ENCODE measurements at regions of chr6 and their contacts with region 1.

Region 1: DNA sequence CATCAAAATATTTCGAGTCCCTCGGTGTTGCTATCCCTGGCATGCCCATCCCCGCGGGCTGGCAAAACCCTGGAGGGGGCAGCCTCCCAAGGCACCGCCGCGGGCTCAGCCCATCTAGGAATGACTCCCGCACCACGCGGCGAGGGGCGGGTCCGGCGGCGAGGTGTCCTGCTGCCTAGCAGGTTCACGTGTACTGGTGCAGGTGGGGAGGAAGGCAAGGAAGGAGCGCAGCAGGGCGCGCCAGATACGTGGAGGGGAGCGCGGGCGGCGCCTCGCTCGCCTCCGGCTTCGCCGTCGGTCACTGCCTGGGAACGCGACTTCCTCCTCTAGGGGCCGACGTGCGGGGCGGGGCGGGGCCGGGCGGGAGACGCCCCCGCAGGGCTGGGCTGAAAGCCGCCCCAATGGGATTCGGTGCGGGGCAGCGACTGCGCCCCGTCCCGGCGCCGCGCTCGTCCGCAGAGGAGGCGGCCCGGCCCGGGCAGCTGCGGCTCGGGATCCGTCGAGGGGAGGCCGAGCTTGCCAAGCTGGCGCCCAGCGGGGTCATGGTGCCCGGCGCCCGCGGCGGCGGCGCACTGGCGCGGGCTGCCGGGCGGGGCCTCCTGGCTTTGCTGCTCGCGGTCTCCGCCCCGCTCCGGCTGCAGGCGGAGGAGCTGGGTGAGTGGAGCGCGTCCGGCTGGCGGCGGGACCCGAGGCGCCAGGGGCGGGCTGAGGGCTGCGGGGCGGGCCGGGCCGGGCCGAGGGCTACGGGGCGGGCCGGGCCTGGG is at the start of gene DCBLD1:
- DNase-seq: peak; percentile 66
- ATAC-seq: peak; percentile 87
- H3K4me3 Mint-ChIP-seq: peak within 1 kb of the TSS; percentile 85
- H3K27ac Mint-ChIP-seq: peak within 1 kb of the TSS; percentile 48
- H3K4me1 Mint-ChIP-seq: peaks cover 18% of the 10 kb centered on the region
- H3K27me3 Mint-ChIP-seq: peaks cover 47% of the 10 kb centered on the region
- total RNA-seq, gene DCBLD1: 2.5 to 4.3 TPM

Region 2: DNA sequence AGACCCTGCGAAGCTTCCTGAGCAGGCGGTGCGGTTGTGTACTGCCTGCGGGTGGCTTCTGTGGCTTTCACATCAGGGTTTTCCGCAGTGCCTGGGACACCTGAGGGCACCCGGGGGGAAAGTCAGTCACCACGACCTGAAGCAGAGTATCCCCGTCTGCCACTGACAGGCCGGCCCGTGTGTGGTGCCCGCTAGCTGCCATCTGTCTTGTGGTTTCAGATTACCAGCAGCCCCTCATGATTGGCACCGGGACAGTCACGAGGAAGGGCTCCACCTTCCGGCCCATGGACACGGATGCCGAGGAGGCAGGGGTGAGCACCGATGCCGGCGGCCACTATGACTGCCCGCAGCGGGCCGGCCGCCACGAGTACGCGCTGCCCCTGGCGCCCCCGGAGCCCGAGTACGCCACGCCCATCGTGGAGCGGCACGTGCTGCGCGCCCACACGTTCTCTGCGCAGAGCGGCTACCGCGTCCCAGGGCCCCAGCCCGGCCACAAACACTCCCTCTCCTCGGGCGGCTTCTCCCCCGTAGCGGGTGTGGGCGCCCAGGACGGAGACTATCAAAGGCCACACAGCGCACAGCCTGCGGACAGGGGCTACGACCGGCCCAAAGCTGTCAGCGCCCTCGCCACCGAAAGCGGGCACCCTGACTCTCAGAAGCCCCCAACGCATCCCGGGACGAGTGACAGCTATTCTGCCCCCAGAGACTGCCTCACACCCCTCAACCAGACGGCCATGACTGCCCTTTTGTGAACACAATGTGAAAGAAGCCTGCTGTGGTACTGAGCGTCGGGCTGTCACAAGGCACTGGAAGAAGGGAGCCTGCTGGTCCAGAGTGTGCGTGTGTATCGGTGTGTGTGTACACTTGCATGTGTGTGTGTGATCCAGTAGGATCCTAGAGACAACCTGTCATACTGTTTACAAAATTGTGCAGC is 65.5 kb after region 1 on chr6:
- CTCF ChIA-PET with region 1: interaction called, 15 read pairs
- POLR2A ChIA-PET with region 1: interaction called, 4 read pairs
- DNase-seq: peak; percentile 62
- ATAC-seq: peak; percentile 56
- H3K4me3 Mint-ChIP-seq: peak overlapping the region; percentile 75
- H3K27ac Mint-ChIP-seq: peak overlapping the region; percentile 89
- H3K4me1 Mint-ChIP-seq: peaks cover 44% of the 10 kb centered on the region
- H3K27me3 Mint-ChIP-seq: peaks cover 16% of the 10 kb centered on the region

Region 3: GRCh38 chr6:117555882-117556498 is 73.6 kb after region 1 on chr6:
- CTCF ChIA-PET with region 1: interaction called, 39 read pairs
- POLR2A ChIA-PET with region 1: no interaction called
- DNase-seq: peak; percentile 71
- ATAC-seq: peak; percentile 51
- H3K4me3 Mint-ChIP-seq: no peak overlapping the region
- H3K27ac Mint-ChIP-seq: no peak overlapping the region
- H3K4me1 Mint-ChIP-seq: peaks cover 1% of the 10 kb centered on the region
- H3K27me3 Mint-ChIP-seq: peaks cover 5% of the 10 kb centered on the region